Heart right ventricle (tissue), 16 donors: ENCODE measurements at regions of chr5 and their contacts with region 1.

Region 1: GRCh38 chr5:114319821-114320220 is 42.0 kb upstream of the KCNN2 start:
- DNase-seq: no peak
- ATAC-seq: peak in 7 of 8 donors; percentile 38 to 91 (median 72)
- H3K4me3 ChIP-seq: no peak overlapping the region
- H3K27ac ChIP-seq: peak overlapping the region in 7 of 10 donors; percentile 15 to 81 (median 59)
- H3K4me1 ChIP-seq: peaks cover 0 to 37% (median 0%) of the 10 kb centered on the region in 9 donors
- H3K27me3 ChIP-seq: no peaks in the 10 kb centered on the region
- CTCF ChIP-seq: no peak

Region 2: GRCh38 chr5:114118511-114118910 is 201.3 kb before region 1 on chr5:
- intact Hi-C with region 1: no loop called
- DNase-seq: no peak
- ATAC-seq: no peak
- H3K4me3 ChIP-seq: no peak overlapping the region
- H3K27ac ChIP-seq: no peak overlapping the region
- H3K4me1 ChIP-seq: peaks cover 0 to 6% (median 0%) of the 10 kb centered on the region in 9 donors
- H3K27me3 ChIP-seq: no peaks in the 10 kb centered on the region
- CTCF ChIP-seq: no peak

Region 3: DNA sequence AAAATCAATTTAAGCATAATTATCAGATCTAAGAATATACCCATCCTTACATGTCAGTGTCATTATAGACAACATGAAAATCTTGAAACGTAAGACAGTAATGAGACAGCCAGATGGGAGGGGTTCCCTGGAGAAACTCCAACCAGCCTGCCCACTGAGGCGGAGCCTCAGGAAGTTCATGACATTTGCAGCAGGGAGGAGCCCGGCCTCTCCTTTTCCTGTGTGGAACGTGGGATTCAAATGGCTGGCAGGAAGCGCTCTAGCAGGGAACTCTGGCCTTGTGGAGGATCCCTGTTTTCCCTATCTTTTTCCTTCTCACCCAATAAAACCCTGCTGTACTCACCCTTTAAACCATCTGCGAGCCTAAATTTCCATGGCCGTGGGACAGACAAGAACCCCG is 134.5 kb before region 1 on chr5:
- intact Hi-C with region 1: loop called in 1 of 10 experiments (anchors 10 kb)
- DNase-seq: peak; percentile 32 to 66
- ATAC-seq: peak; percentile 38 to 93 (median 80)
- H3K4me3 ChIP-seq: peak overlapping the region in 2 of 10 donors; percentile 11 to 21
- H3K27ac ChIP-seq: peak overlapping the region in 9 of 10 donors; percentile 21 to 71 (median 63)
- H3K4me1 ChIP-seq: peaks cover 0 to 36% (median 5%) of the 10 kb centered on the region in 9 donors
- H3K27me3 ChIP-seq: no peaks in the 10 kb centered on the region
- CTCF ChIP-seq: no peak